Activated CD4-positive, alpha-beta T cell treated with anti-CD3 and anti-CD28 coated beads, Interleukin-2, amount 10 ng/mL, durations not matched to agents 24 days and 14 days (primary cell): ENCODE measurements at regions of chr3 and their contacts with region 1.

Region 1: GRCh38 chr3:111691293-111691909 is 96.3 kb upstream of the ZBED2 start:
- DNase-seq: no peak
- H3K4me3 Mint-ChIP-seq: no peak overlapping the region
- H3K27ac Mint-ChIP-seq: no peak overlapping the region
- H3K4me1 Mint-ChIP-seq: peaks cover 48% of the 10 kb centered on the region
- H3K27me3 Mint-ChIP-seq: no peaks in the 10 kb centered on the region

Region 2: GRCh38 chr3:111668912-111669488 is 22.4 kb before region 1 on chr3:
- intact Hi-C with region 1: loop called (anchors 1 kb)
- DNase-seq: peak; percentile 69
- H3K4me3 Mint-ChIP-seq: peak overlapping the region; percentile 22
- H3K27ac Mint-ChIP-seq: peak overlapping the region; percentile 73
- H3K4me1 Mint-ChIP-seq: peaks cover 69% of the 10 kb centered on the region
- H3K27me3 Mint-ChIP-seq: no peaks in the 10 kb centered on the region

Region 3: GRCh38 chr3:112379020-112379690 is 687.8 kb after region 1 on chr3:
- intact Hi-C with region 1: no loop called
- DNase-seq: no peak
- H3K4me3 Mint-ChIP-seq: no peak overlapping the region
- H3K27ac Mint-ChIP-seq: peak overlapping the region; percentile 26
- H3K4me1 Mint-ChIP-seq: peaks cover 27% of the 10 kb centered on the region
- H3K27me3 Mint-ChIP-seq: no peaks in the 10 kb centered on the region